ENCODE measurements at regions of chr12 and their contacts with region 1.

Region 1: GRCh38 chr12:26318661-26319068 is 123.3 kb downstream of the SSPN start:
- DNase-seq: peak; percentile 92
- H3K4me3 ChIP-seq: peak overlapping the region in 2 of 3 experiments; percentile 7 to 22
- H3K27ac ChIP-seq: peak overlapping the region; percentile 97
- H3K4me1 ChIP-seq: peaks cover 33% of the 10 kb centered on the region
- H3K27me3 ChIP-seq: no peaks in the 10 kb centered on the region
- CTCF ChIP-seq: no peak

Region 2: DNA sequence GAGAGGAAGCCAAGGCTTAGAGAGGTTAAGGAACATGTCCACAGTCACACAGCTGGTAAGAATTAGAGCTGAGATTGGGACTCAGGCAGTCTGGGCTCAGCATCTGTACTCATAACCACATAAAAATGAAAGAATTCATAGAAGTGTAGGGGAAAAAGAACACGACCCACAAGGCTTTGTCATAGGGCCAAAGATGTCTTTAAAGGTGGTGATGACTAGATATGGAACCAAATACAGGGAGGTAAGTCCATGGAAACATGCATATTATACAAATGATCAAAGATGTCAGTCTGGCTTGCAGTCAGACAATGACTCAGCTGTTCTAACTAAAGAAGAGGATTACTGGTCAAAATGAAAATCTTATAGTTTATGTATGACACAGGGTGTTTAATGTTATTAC is 130.5 kb before region 1 on chr12:
- CTCF ChIA-PET with region 1: no interaction called
- dilution Hi-C with region 1: no loop called
- in situ Hi-C with region 1: no loop called
- intact Hi-C with region 1: loop called (anchors 5 kb)
- DNase-seq: peak; percentile 74
- H3K4me3 ChIP-seq: no peak overlapping the region
- H3K27ac ChIP-seq: peak overlapping the region; percentile 41
- H3K4me1 ChIP-seq: peaks cover 33% of the 10 kb centered on the region
- H3K27me3 ChIP-seq: no peaks in the 10 kb centered on the region
- CTCF ChIP-seq: no peak

Region 3: GRCh38 chr12:26246483-26247111 is 72.1 kb before region 1 on chr12:
- CTCF ChIA-PET with region 1: no interaction called
- dilution Hi-C with region 1: no loop called
- in situ Hi-C with region 1: no loop called
- intact Hi-C with region 1: loop called (anchors 2 kb)
- DNase-seq: peak; percentile 93
- H3K4me3 ChIP-seq: no peak overlapping the region
- H3K27ac ChIP-seq: peak overlapping the region; percentile 72
- H3K4me1 ChIP-seq: peaks cover 26% of the 10 kb centered on the region
- H3K27me3 ChIP-seq: no peaks in the 10 kb centered on the region
- CTCF ChIP-seq: no peak

Region 4: DNA sequence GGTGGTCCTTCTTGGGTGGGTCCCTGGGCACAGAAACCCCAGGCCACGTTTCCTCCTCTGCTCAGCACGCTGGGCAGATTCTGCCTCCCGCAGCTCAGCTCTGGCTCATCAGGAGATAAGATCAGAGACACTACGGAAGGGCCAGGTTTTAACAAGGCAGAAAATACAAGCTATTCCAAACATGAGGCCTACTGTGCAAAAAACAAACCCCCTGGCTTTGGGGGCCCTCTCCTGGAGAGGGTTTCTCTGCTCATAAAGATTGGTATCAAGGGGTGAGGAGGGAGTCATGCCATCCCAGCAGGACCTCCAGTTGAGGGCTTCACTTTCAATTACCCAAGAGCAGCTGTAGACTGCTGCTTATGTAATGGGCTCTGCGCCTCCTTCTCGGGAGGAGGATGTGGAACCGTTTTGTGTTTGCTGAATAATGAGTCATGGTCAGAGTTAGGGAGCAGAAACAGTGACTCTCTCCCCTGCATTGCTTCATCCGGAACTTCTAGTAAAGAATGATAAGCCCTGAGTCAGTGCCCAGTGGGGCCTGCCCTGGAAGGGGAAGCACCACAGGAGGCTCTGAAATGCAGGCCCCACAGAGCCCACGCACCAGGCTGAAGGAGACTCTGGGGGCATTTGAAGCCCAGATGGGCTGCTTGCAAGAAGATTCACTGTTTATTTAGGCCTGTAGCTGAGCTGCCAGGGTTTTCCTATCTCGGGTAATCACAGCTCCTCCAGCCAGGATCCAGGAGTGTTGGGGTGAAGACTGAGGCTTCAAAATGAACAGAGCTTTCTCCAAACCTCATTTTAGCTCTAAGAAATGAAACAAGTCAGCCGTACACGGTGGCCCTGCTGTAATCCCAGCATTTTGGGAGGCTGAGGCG is 44.0 kb before region 1 on chr12:
- CTCF ChIA-PET with region 1: no interaction called
- dilution Hi-C with region 1: no loop called
- in situ Hi-C with region 1: no loop called
- intact Hi-C with region 1: loop called (anchors 2 kb)
- DNase-seq: peak; percentile 100
- H3K4me3 ChIP-seq: no peak overlapping the region
- H3K27ac ChIP-seq: peak overlapping the region; percentile 87
- H3K4me1 ChIP-seq: peaks cover 63% of the 10 kb centered on the region
- H3K27me3 ChIP-seq: no peaks in the 10 kb centered on the region
- CTCF ChIP-seq: peak in 1 of 2 donors; percentile 29

Region 5: DNA sequence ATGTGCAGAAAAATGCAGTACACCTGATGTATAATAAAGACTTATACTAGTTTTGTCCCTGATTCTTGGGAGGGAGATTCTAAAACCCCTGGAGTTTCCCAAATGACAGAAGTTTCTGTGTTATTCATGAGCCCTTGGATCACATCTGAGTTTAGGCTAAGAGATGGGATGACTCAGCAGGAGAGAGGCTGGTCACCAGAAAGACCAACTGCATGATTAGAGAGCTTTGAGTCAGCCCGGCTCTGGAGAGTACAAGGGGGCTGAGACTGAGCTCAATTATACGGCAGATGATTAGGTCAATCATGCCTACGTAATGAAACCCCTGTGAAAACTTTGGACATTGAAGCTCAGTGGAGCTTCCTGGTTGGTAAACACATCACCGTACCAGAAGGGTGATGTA is 50.9 kb after region 1 on chr12:
- CTCF ChIA-PET with region 1: no interaction called
- dilution Hi-C with region 1: loop called (anchors 5 kb)
- in situ Hi-C with region 1: no loop called
- intact Hi-C with region 1: no loop called
- DNase-seq: peak; percentile 99
- H3K4me3 ChIP-seq: no peak overlapping the region
- H3K27ac ChIP-seq: peak overlapping the region; percentile 33
- H3K4me1 ChIP-seq: peaks cover 19% of the 10 kb centered on the region
- H3K27me3 ChIP-seq: no peaks in the 10 kb centered on the region
- CTCF ChIP-seq: no peak

Region 6: DNA sequence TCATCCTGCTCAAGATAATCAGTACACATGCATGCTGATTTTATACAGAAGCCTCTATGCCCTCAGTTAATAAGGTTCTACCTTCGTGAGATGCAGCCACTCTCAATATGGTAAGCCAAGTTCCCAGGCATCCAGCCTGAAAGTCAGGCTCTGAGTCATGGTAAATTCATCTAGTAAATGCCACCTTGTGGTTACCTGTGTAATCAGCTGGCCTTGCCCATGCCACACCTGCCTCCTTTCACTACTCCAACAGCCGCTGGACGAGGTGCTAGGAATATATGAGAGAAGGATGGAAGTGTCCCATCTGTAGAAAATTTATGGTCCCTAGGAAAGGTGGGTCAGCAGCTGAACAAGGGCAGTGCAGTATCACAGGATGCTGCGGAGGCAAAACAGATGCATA is 84.0 kb after region 1 on chr12:
- CTCF ChIA-PET with region 1: no interaction called
- dilution Hi-C with region 1: no loop called
- in situ Hi-C with region 1: no loop called
- intact Hi-C with region 1: loop called (anchors 5 kb)
- DNase-seq: peak; percentile 94
- H3K4me3 ChIP-seq: no peak overlapping the region
- H3K27ac ChIP-seq: no peak overlapping the region
- H3K4me1 ChIP-seq: peaks cover 14% of the 10 kb centered on the region
- H3K27me3 ChIP-seq: no peaks in the 10 kb centered on the region
- CTCF ChIP-seq: peak; percentile 39 to 57

Region 7: DNA sequence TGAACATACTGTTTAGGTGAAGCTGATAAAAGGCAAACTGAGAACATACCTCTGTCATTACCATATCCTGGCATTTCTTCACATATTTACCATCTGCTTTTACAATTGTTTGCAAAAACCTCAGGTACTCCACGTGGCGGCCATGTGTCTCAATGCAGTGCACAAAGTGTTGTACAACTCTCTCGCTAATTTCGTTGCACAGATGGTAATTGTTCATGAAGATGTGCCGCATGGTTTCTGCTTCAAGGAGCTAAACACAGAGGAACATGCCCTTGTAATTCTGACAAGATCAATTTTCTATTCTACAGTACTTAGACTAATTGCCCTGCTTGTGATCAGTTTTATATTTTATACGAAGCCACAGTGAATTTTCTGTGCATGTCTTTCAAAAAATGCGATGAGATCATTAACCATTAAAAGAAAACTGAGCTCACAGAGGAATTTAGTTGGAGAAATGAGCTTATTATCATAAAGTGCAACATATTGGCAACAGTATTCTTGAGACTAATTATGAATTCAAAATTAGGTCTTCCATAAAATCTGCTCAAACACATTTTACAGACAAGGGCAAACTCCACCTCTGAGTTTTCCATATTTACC is 280.5 kb after region 1 on chr12:
- CTCF ChIA-PET with region 1: no interaction called
- dilution Hi-C with region 1: no loop called
- in situ Hi-C with region 1: no loop called
- intact Hi-C with region 1: no loop called
- DNase-seq: no peak
- H3K4me3 ChIP-seq: no peak overlapping the region
- H3K27ac ChIP-seq: no peak overlapping the region
- H3K4me1 ChIP-seq: no peaks in the 10 kb centered on the region
- H3K27me3 ChIP-seq: no peaks in the 10 kb centered on the region
- CTCF ChIP-seq: no peak